ENCODE measurements at regions of chr16 and their contacts with region 1.

Region 1: DNA sequence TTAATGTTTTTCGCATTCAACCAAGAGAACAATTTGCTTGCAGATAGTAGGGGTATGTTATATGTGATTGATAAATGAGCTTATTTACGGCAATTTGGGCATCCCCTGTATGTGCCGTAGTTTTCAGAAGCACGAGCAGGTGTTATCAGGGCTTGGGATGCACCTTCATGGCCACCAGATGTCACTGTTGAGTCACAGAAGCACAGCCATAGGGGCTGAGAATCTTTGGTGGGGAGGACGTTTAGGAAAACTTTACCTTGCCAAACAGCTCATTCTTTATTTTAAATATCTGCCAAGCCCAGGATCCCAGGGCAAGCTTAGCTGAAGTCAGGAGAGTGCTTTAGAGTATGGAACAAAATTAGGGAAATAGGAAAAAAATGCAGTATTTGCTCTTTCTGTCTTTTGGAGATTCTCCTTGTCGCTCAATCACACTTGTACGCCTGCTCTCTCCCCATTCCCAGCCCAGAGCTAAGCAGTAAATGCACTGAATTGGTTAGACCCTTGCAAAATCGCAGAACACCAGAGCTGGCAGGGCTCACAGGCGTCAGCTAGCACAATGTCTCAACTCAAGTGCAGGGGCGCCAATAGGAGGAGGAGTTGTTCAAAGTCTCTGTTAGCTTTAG is 93.6 kb upstream of the MPHOSPH6 start:
- H3K4me3 Mint-ChIP-seq: no peak overlapping the region
- H3K27ac Mint-ChIP-seq: no peak overlapping the region
- H3K4me1 Mint-ChIP-seq: peaks cover 17% of the 10 kb centered on the region
- H3K27me3 Mint-ChIP-seq: peaks cover 13% of the 10 kb centered on the region

Region 2: GRCh38 chr16:82344157-82344556 is 80.5 kb after region 1 on chr16:
- intact Hi-C with region 1: no loop called
- H3K4me3 Mint-ChIP-seq: no peak overlapping the region
- H3K27ac Mint-ChIP-seq: no peak overlapping the region
- H3K4me1 Mint-ChIP-seq: no peaks in the 10 kb centered on the region
- H3K27me3 Mint-ChIP-seq: peaks cover 4% of the 10 kb centered on the region

Region 3: DNA sequence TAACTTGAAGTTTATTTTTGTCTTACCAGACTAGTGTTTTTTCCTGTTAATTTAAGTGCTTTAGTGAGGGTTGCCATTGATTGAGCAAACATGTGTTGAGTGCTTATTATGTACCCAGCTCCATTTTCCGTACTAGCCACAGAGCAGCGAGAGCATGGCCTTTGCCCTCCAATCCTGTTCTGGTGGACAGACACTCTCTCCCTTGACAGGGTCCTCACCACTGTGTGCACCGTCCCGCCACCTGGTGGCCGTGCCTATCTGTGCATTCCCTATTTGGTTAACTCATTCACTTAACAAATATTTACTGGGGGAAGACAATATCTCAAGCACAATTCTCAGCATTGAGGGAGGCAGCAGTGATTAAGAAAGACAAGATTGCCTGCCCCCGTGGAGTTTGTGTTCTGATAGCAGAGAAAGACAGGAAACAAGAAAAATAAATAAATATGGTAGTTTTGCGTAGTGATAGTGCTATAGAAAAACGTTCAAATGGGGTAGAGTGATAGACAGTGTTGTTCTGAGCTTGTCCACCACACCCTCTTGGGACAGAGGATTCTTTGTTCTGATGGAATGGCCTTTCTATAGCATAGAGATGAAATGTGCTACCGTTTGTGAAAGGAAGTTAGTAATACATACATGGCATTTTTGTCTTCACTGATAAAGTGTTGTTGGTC is 376.2 kb after region 1 on chr16:
- intact Hi-C with region 1: loop called (anchors 5 kb)
- H3K4me3 Mint-ChIP-seq: no peak overlapping the region
- H3K27ac Mint-ChIP-seq: no peak overlapping the region
- H3K4me1 Mint-ChIP-seq: no peaks in the 10 kb centered on the region
- H3K27me3 Mint-ChIP-seq: peaks cover 2% of the 10 kb centered on the region

Region 4: DNA sequence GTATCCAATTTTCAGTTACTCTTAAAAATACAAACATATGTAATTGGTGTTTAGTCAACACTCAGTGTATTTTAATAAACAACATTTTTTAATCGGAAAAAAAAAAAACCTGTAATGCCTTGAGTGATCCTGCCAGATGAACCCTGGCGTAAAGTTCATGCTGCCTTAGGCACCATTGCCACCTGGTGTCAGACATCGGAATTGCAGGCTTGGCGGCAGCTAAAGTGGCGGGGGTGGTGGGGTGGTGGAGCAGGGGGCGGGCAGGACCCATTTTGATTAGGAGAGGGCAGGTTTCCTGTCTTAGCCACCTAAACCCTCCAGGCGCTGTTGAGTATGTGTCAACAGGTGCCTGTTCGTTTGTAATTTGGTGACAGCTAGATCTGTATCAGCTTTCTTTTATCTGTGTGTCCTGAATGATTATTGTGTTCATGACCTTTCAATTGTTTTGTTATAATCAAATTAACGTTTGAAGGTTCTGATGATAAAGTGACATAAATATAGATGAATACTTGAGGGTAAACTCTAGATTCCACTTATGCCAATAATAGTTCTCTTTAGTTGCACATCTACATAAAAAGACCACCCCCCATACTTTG is 951.9 kb after region 1 on chr16:
- intact Hi-C with region 1: loop called (anchors 5 kb)
- H3K4me3 Mint-ChIP-seq: no peak overlapping the region
- H3K27ac Mint-ChIP-seq: no peak overlapping the region
- H3K4me1 Mint-ChIP-seq: no peaks in the 10 kb centered on the region
- H3K27me3 Mint-ChIP-seq: peaks cover 2% of the 10 kb centered on the region